ENCODE measurements at regions of chr2 and their contacts with region 1.

Region 1: DNA sequence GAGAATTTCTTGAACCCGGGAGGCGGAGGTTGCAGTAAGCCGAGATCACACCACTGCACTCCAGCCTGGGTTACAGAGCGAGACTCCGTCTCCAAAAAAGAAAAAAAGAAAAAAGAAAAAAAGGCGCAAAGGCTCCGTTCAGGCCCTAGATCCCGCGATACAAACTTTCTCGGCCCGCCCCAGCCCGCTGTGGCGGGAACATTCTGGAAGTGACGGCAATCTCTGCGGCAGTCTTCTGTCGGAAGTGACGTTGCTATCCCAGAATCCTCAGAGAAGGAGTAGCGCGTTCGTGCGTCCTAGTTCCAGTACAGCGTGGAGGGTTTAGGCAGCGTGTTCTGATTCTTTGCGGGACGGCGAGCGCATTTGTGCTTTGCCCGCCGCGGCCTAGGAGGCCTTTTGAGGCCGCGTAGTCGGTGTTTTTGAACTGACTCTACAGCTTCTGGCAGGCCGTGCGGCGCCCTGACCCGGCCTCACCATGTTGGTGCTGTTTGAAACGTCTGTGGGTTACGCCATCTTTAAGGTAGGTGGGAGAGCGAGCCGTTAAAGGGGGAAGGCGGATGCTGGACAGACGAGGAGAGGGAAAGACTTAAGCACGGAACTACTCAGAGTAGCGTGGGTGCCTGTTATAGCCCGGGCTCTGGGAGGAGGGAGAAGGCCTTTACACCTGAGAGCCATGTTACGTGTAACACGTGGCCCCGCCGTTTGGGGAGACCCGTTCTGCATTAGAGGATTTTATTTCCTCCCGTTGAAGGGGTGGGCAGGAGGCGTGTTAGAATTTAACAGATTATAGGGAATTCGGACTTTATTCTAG is at the start of gene NOP58:
- DNase-seq: peak; percentile 49 to 88
- H3K4me3 ChIP-seq: peak within 1 kb of the TSS; percentile 83 to 100 (median 99)
- H3K27ac ChIP-seq: peak within 1 kb of the TSS; percentile 99
- H3K4me1 ChIP-seq: peaks cover 0 to 3% (median 1%) of the 10 kb centered on the region in 4 experiments; a peak in 2 of 7 replicates
- H3K27me3 ChIP-seq: no peaks in the 10 kb centered on the region
- CTCF ChIP-seq: no peak
- EP300 ChIP-seq: no peak
- POLR2A ChIP-seq: peak; percentile 99
- RAD21 ChIP-seq: no peak
- total RNA-seq, gene NOP58: 128 and 133 TPM in 2 replicates

Region 2: DNA sequence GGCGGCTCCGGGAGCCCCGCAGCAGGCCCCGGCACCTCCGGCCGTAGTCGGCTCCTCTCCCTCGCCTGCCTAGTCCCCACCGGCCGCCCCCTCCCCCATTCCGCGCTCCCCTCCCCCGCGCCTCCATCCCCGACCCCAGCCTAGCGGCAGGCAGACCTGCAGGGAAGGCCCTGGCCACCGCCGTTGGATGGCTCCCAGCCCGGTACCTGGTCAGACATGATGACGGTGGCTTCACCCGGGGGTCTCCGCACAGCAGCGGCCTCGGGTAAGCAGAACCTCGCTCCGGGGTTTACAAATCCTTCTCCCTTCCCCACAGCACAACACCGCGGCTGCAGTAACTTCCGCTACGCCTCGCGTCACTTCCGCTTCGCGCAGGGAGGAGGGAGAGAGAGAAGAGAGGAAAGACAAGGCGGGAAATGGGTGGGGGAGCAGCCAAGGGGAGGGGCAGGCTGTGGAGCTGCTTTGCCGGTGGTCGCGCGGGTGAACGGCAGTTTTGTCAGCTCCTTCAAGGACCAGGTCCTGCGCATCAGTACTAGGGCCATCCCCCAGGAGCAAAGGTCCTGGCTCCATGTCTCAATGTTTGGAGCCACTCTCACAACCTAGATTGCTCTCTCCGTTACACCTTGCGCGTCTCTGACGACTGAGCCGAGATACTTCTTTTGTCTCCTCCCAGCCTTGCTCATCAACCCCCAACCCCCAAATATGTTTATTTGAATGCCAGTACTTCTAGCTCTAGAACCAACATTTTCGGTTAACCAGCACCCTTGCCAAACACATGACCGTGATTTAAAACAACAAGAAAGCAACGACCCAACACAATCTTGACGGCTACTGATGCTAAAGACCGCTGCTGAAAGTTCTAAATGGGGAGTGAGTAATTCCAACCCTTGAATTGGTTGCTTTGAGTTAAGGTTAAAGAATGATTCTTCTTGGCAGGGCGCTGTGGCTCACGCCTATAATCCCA is 27.2 kb before region 1 on chr2 and contains the start of gene SUMO1:
- CTCF ChIA-PET with region 1: interaction called, 5 read pairs
- POLR2A ChIA-PET with region 1: interaction called, 126 read pairs
- DNase-seq: peak; percentile 82 to 95
- H3K4me3 ChIP-seq: peak within 1 kb of the TSS; percentile 81 to 99 (median 98)
- H3K27ac ChIP-seq: peak within 1 kb of the TSS; percentile 96
- H3K4me1 ChIP-seq: peaks cover 0 to 3% (median 0%) of the 10 kb centered on the region in 4 experiments; a peak in 3 of 7 replicates
- H3K27me3 ChIP-seq: no peaks in the 10 kb centered on the region
- CTCF ChIP-seq: no peak
- EP300 ChIP-seq: no peak
- POLR2A ChIP-seq: peak; percentile 84 to 99
- RAD21 ChIP-seq: no peak
- total RNA-seq, gene SUMO1: 232 and 238 TPM in 2 replicates

Region 3: GRCh38 chr2:202249521-202249850 is 16.2 kb before region 1 on chr2:
- CTCF ChIA-PET with region 1: interaction called, 3 read pairs
- POLR2A ChIA-PET with region 1: interaction called, 17 read pairs
- DNase-seq: no peak
- H3K4me3 ChIP-seq: peak overlapping the region in 1 of 4 experiments; percentile 40; a peak in 1 of 8 replicates
- H3K27ac ChIP-seq: peak overlapping the region; percentile 66; the same call in 1 of the 2 replicates
- H3K4me1 ChIP-seq: peaks cover 2 to 8% (median 6%) of the 10 kb centered on the region in 4 experiments; a peak in 6 of 7 replicates
- H3K27me3 ChIP-seq: no peaks in the 10 kb centered on the region
- CTCF ChIP-seq: no peak
- EP300 ChIP-seq: no peak
- POLR2A ChIP-seq: no peak
- RAD21 ChIP-seq: no peak

Region 4: DNA sequence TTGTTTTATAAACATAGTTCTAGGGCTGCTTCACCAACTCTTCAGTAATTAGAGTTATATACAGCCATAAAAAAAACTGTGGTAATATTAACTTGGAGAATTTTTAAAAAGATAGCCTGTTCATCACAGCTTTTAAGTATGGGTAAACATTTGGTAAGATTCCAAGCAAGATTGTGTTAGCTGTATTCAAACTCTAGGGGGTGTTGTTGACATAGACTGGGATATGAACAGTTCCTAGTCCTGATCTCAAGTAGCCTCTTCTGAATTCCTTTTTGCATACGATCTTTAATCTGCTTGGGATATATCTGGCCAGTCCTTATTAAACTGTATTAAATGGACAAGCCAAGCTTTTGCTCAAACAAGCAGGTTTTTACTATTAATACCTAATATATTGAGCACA is 13.3 kb after region 1 on chr2:
- CTCF ChIA-PET with region 1: interaction called, 7 read pairs
- POLR2A ChIA-PET with region 1: interaction called, 24 read pairs
- DNase-seq: no peak
- H3K4me3 ChIP-seq: no peak overlapping the region
- H3K27ac ChIP-seq: no peak overlapping the region
- H3K4me1 ChIP-seq: no peaks in the 10 kb centered on the region
- H3K27me3 ChIP-seq: no peaks in the 10 kb centered on the region
- CTCF ChIP-seq: peak in 2 of 3 experiments; percentile 7 to 64; a peak in 2 of 4 replicates
- EP300 ChIP-seq: no peak
- POLR2A ChIP-seq: no peak
- RAD21 ChIP-seq: peak; percentile 44 to 55

Region 5: GRCh38 chr2:202339071-202339870 is 73.6 kb after region 1 on chr2:
- CTCF ChIA-PET with region 1: no interaction called
- POLR2A ChIA-PET with region 1: no interaction called
- DNase-seq: no peak
- H3K4me3 ChIP-seq: no peak overlapping the region
- H3K27ac ChIP-seq: no peak overlapping the region
- H3K4me1 ChIP-seq: peaks cover 0 to 3% (median 0%) of the 10 kb centered on the region in 4 experiments; a peak in 1 of 7 replicates
- H3K27me3 ChIP-seq: no peaks in the 10 kb centered on the region
- CTCF ChIP-seq: no peak
- EP300 ChIP-seq: no peak
- POLR2A ChIP-seq: no peak
- RAD21 ChIP-seq: no peak